Dendritic cell treated with granulocyte-macrophage colony-stimulating factor and Interleukin-4, amounts not matched to agents 40 ng/mL and 50 ng/mL, for 4 days (primary cell): ENCODE measurements at regions of chr13 and their contacts with region 1.

Region 1: DNA sequence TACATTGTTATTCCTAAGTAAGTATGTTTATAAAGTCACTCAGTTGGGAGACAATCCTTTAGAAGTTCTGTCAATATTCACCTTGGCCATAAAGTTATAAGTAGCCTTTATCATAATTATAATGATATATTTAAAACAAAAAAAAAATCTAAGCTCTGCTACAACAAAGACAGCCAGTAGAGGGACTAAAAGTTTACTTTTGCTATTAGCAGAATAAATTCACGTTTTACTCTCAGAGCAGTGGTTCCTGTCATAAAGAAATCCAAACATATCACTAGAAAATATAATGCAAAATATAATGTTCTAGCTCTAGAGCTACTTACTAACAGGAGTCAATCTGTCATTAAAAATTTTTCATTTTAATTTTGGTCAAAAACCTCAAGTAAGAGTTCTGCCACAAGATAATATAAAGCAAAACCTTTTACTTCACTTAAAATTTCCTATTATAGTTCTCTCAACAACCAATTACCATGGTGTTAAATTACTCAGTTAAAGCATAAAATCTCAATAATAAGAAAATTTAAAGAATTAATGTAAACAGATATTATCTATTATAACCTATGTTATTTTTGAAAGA is 17.7 kb downstream of the INTS6 start:
- H3K4me3 Mint-ChIP-seq: no peak overlapping the region
- H3K27ac Mint-ChIP-seq: no peak overlapping the region
- H3K4me1 Mint-ChIP-seq: no peaks in the 10 kb centered on the region
- H3K27me3 Mint-ChIP-seq: no peaks in the 10 kb centered on the region

Region 2: GRCh38 chr13:51759240-51759639 is 324.1 kb after region 1 on chr13:
- intact Hi-C with region 1: loop called (anchors 10 kb)
- H3K4me3 Mint-ChIP-seq: no peak overlapping the region
- H3K27ac Mint-ChIP-seq: no peak overlapping the region
- H3K4me1 Mint-ChIP-seq: peaks cover 9% of the 10 kb centered on the region
- H3K27me3 Mint-ChIP-seq: no peaks in the 10 kb centered on the region

Region 3: DNA sequence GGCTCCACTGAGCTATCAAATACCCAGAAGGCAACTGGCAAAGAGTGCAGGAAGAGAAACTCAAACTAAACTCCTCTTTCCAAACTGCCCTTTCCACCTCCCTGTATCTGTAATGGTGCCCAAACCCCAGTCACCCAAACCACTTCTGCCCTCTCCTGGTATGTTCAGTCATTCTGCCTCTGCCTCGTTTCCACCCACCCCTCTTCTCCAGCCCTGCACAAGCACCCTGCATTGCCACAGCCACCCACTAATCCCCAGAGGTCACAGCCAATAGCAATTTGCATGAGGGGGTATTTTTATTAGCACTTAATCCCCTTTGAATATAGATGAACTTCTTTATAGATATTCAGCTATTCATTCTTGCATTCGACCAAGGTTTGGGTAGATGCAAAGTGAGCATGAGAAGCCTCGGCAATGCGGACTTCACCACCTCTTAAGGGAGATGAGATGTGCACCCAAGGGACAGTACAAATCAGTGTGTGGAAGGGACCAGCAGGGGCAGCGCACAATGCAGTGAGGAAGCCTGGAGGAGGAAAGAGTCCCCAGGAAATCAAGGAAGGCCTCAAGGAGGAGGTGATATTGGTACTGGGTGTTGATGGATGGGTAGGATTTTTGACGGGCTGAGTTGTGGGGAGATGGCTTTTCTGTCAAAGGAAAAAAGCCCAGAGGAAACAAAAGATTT is 397.5 kb after region 1 on chr13:
- intact Hi-C with region 1: loop called (anchors 5 kb)
- H3K4me3 Mint-ChIP-seq: no peak overlapping the region
- H3K27ac Mint-ChIP-seq: no peak overlapping the region
- H3K4me1 Mint-ChIP-seq: peaks cover 52% of the 10 kb centered on the region
- H3K27me3 Mint-ChIP-seq: peaks cover 3% of the 10 kb centered on the region

Region 4: GRCh38 chr13:52695856-52696255 is 1260.8 kb after region 1 on chr13:
- intact Hi-C with region 1: no loop called
- H3K4me3 Mint-ChIP-seq: no peak overlapping the region
- H3K27ac Mint-ChIP-seq: no peak overlapping the region
- H3K4me1 Mint-ChIP-seq: no peaks in the 10 kb centered on the region
- H3K27me3 Mint-ChIP-seq: no peaks in the 10 kb centered on the region